A549 (cell line): ENCODE measurements at regions of chr11 and their contacts with region 1.

Region 1: GRCh38 chr11:85627998-85628770 is at the start of gene TMEM126B:
- DNase-seq: peak; percentile 84 to 96
- ATAC-seq: peak; percentile 97 to 99
- H3K4me3 ChIP-seq: peak within 1 kb of the TSS; percentile 57
- H3K27ac ChIP-seq: peak within 1 kb of the TSS; percentile 79 to 89
- H3K4me1 ChIP-seq: peaks cover 14% of the 10 kb centered on the region
- CTCF ChIP-seq: no peak
- EP300 ChIP-seq: no peak
- POLR2A ChIP-seq: peak; percentile 87
- RAD21 ChIP-seq: no peak
- polyA plus RNA-seq, gene TMEM126B: 88.9 and 114 TPM in 2 replicates

Region 2: GRCh38 chr11:85472953-85473352 is 155.2 kb before region 1 on chr11:
- CTCF ChIA-PET with region 1: no interaction called
- POLR2A ChIA-PET with region 1: no interaction called
- DNase-seq: no peak
- ATAC-seq: no peak
- H3K4me3 ChIP-seq: no peak overlapping the region
- H3K27ac ChIP-seq: no peak overlapping the region
- H3K4me1 ChIP-seq: no peaks in the 10 kb centered on the region
- CTCF ChIP-seq: no peak
- EP300 ChIP-seq: no peak
- POLR2A ChIP-seq: no peak
- RAD21 ChIP-seq: no peak

Region 3: GRCh38 chr11:85517272-85517671 is 110.9 kb before region 1 on chr11:
- CTCF ChIA-PET with region 1: no interaction called
- POLR2A ChIA-PET with region 1: no interaction called
- DNase-seq: no peak
- ATAC-seq: no peak
- H3K4me3 ChIP-seq: no peak overlapping the region
- H3K27ac ChIP-seq: no peak overlapping the region
- H3K4me1 ChIP-seq: no peaks in the 10 kb centered on the region
- CTCF ChIP-seq: no peak
- EP300 ChIP-seq: no peak
- POLR2A ChIP-seq: no peak
- RAD21 ChIP-seq: no peak

Region 4: DNA sequence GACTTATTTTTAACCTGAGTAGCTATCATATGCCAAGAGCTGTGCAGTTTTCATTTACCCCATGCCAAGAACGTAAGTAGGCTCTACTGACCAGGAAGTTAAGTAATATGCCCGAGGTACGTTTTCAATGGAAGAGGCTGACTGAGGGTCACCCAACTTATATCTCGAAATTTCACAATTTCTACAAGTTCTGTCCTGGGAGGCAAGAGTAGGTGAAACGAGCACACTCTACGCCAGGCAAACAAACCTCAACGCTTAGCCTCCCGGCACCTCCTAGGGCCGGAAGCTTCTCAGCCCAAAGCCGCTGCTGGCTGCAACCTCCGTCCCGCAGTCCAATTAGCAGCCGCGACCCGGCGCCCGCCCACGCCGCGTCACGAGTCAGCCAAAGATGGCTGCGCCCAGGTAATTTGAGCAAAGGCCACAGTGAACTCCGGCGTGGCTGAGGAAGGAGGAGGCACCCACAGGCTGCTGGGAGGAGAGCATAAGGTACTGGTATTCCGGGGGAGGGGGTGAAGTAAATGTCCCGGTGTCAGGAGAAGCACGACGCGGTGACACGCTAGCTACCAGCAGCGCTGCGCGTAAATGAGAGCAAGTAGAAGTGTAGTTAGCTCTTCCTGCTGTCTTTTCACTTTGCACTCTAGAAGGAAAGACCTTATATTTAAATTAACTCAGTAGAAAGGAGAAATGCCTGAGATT is 19.6 kb after region 1 on chr11 and contains the start of gene TMEM126A:
- CTCF ChIA-PET with region 1: interaction called, 3 read pairs
- POLR2A ChIA-PET with region 1: interaction called, 30 read pairs
- DNase-seq: peak; percentile 77 to 89
- ATAC-seq: peak; percentile 97 to 98
- H3K4me3 ChIP-seq: peak within 1 kb of the TSS; percentile 75
- H3K27ac ChIP-seq: peak within 1 kb of the TSS; percentile 86 to 89
- H3K4me1 ChIP-seq: peaks cover 18% of the 10 kb centered on the region; the same call in 2 of the 3 replicates
- CTCF ChIP-seq: no peak
- EP300 ChIP-seq: no peak
- POLR2A ChIP-seq: peak; percentile 88
- RAD21 ChIP-seq: no peak
- polyA plus RNA-seq, gene TMEM126A: 101 and 123 TPM in 2 replicates